ENCODE measurements at regions of chr2 and their contacts with region 1.

Region 1: GRCh38 chr2:175630280-175631244 is 371.5 kb downstream of the LNPK start:
- DNase-seq: no peak
- H3K4me3 ChIP-seq: no peak overlapping the region
- H3K27ac ChIP-seq: no peak overlapping the region
- H3K4me1 ChIP-seq: no peaks in the 10 kb centered on the region
- H3K27me3 ChIP-seq: no peaks in the 10 kb centered on the region
- CTCF ChIP-seq: no peak

Region 2: DNA sequence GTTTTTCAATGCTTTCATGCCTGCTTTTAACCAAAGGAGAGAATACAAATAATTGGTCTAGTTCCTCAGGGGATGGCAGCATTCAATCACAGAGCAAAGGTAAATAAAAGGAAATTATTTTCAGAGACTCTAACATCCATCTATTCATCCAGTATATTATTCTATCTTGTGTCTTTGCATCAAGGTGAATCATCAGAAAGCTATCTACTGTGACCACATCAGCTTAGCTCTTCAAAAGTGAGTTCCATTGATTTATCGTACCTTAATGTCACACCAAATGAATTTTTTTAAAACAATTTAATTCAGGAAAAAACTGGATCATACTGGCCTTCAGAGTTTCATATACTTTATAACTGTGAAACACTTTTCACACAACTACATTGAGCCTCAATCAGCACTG is 691.5 kb before region 1 on chr2:
- intact Hi-C with region 1: no loop called
- DNase-seq: no peak
- H3K4me3 ChIP-seq: no peak overlapping the region
- H3K27ac ChIP-seq: no peak overlapping the region
- H3K4me1 ChIP-seq: no peaks in the 10 kb centered on the region
- H3K27me3 ChIP-seq: no peaks in the 10 kb centered on the region
- CTCF ChIP-seq: no peak

Region 3: GRCh38 chr2:175525791-175526374 is 104.7 kb before region 1 on chr2:
- intact Hi-C with region 1: no loop called
- DNase-seq: no peak
- H3K4me3 ChIP-seq: no peak overlapping the region
- H3K27ac ChIP-seq: no peak overlapping the region
- H3K4me1 ChIP-seq: no peaks in the 10 kb centered on the region
- H3K27me3 ChIP-seq: no peaks in the 10 kb centered on the region
- CTCF ChIP-seq: no peak

Region 4: GRCh38 chr2:175606010-175606841 is 24.3 kb before region 1 on chr2:
- intact Hi-C with region 1: loop called (anchors 1 kb)
- DNase-seq: no peak
- H3K4me3 ChIP-seq: no peak overlapping the region
- H3K27ac ChIP-seq: no peak overlapping the region
- H3K4me1 ChIP-seq: no peaks in the 10 kb centered on the region
- H3K27me3 ChIP-seq: no peaks in the 10 kb centered on the region
- CTCF ChIP-seq: no peak

Measured in tibial artery (tissue), 4 donors.